ENCODE measurements at regions of chr7 and their contacts with region 1.

Region 1: DNA sequence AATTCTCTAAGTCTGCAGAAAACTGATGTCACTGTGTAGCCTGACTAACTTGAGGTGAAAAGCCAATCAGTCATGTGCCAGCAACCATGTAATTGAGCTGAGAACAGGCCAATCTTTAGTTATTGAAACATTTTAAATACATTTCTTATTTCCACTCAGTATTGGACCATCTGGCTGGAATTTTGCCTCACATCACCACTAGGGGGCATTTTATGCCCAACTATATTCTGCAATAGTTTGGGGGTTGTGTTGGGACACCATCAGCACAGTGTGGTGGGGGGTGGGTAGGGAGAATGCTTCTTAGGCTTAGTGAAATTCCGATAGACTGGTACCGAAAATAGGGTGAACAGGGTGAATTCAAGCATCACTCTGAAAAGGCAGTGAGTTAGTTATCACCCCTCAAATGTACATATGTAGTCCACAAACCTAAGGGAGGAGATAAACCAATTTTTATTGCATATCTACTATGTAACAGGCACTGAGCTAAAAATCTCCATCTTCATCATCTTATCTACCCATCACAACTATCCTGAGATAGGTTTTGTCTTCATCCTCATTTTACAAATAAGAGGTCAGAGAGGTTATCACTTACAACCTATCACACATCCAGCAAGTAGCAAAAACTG is 17.8 kb downstream of the NPSR1 start:
- DNase-seq: peak; percentile 9
- ATAC-seq: peak; percentile 94
- H3K4me3 ChIP-seq: no peak overlapping the region
- H3K27ac ChIP-seq: no peak overlapping the region
- H3K4me1 ChIP-seq: no peaks in the 10 kb centered on the region
- H3K27me3 ChIP-seq: no peaks in the 10 kb centered on the region
- CTCF ChIP-seq: peak; percentile 60 to 70 (median 66)
- EP300 ChIP-seq: no peak
- POLR2A ChIP-seq: no peak
- RAD21 ChIP-seq: peak; percentile 55

Region 2: DNA sequence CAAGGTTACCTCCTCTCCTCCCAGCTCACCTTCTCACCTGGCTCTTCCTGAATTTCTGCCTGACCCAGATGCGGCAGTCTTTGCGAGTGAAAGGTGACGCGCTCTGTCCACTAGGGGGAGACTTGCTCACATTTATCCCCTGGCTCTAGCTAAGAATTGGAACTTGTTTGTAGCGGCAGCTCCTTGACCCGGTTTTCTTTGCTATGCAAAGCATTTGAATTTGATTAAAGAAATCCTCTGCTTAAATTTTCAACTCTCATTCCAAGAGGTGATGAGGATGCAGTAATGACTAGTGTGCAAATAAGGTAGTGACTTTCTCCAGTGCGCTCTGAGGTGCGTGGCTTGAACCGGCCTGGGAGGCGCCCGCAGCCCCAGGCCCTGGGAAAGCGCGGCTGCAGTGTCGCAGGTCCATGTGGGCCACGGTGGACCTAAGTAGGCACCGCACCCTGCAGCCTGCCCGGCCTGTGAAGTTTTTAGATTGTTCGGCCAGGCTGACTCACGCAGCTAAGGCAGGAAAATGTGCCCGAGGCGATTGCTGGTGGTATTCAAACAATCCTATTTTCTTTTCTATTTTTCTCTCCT is 354.8 kb before region 1 on chr7:
- CTCF ChIA-PET with region 1: interaction called, 12 read pairs
- POLR2A ChIA-PET with region 1: no interaction called
- RAD21 ChIA-PET with region 1: no interaction called
- SMC1A ChIA-PET with region 1: no interaction called
- in situ Hi-C with region 1: no loop called
- intact Hi-C with region 1: loop called (anchors 5 kb)
- DNase-seq: peak; percentile 7
- ATAC-seq: peak; percentile 93
- H3K4me3 ChIP-seq: no peak overlapping the region
- H3K27ac ChIP-seq: no peak overlapping the region
- H3K4me1 ChIP-seq: no peaks in the 10 kb centered on the region
- H3K27me3 ChIP-seq: 0 out of 4 replicates have a peak, but pooled peaks cover 0 to 1% of the 10 kb centered on the region in 2 experiments
- CTCF ChIP-seq: peak; percentile 83 to 92 (median 89)
- EP300 ChIP-seq: no peak
- POLR2A ChIP-seq: no peak
- RAD21 ChIP-seq: peak; percentile 79

Region 3: GRCh38 chr7:34727464-34727995 is 51.7 kb after region 1 on chr7:
- CTCF ChIA-PET with region 1: interaction called, 6 read pairs
- POLR2A ChIA-PET with region 1: no interaction called
- RAD21 ChIA-PET with region 1: interaction called, 4 read pairs
- SMC1A ChIA-PET with region 1: interaction called, 9 read pairs
- in situ Hi-C with region 1: no loop called
- intact Hi-C with region 1: loop called (anchors 2 kb)
- DNase-seq: no peak
- ATAC-seq: peak; percentile 76
- H3K4me3 ChIP-seq: no peak overlapping the region
- H3K27ac ChIP-seq: no peak overlapping the region
- H3K4me1 ChIP-seq: no peaks in the 10 kb centered on the region
- H3K27me3 ChIP-seq: no peaks in the 10 kb centered on the region
- CTCF ChIP-seq: no peak
- EP300 ChIP-seq: no peak
- POLR2A ChIP-seq: no peak
- RAD21 ChIP-seq: no peak

Region 4: DNA sequence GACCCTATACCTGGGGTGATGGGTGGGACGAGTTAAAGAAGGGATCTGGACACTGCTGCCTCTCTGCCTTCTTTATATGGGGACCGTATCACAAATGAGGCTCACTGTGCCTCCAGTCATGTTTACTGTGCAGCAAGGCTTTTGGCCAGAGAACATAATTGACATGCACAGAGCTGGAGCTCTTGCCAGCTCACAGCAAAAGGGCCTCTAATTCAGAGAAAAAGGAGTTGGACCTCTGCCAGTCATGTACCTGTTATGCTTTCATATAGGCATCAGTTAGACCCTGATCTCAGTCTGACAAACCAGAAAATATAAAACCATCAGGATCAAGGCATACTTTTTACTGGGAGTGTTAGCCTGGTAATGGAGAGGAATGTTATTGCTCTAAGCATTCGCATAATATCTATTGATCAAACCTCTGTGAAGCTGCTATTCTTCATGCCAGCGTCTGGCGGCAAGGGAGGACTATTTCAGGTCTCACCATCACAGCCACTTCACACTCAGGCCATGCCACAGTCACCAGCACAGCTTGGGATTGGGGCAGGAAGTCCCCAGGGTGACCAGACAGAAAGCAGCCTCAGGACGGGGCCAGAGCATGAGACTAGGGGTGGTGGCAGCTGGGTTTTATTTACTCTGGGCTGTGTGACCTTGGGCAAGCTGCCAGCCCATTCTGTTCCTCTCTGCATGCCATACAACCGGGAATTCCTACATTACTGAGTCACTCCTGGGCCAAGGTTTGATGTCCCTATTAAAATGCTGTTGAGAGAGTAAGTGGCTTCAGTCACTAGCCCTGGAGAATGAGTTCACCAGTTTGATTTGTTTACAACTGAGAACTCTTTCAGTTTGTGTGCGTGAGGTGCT is 72.2 kb after region 1 on chr7:
- CTCF ChIA-PET with region 1: interaction called, 7 read pairs
- POLR2A ChIA-PET with region 1: no interaction called
- RAD21 ChIA-PET with region 1: interaction called, 6 read pairs
- SMC1A ChIA-PET with region 1: interaction called, 17 read pairs
- in situ Hi-C with region 1: no loop called
- intact Hi-C with region 1: no loop called
- DNase-seq: no peak
- ATAC-seq: peak; percentile 64
- H3K4me3 ChIP-seq: no peak overlapping the region
- H3K27ac ChIP-seq: no peak overlapping the region
- H3K4me1 ChIP-seq: no peaks in the 10 kb centered on the region
- H3K27me3 ChIP-seq: no peaks in the 10 kb centered on the region
- CTCF ChIP-seq: peak in 1 of 3 experiments; percentile 24; a peak in 2 of 6 replicates
- EP300 ChIP-seq: no peak
- POLR2A ChIP-seq: no peak
- RAD21 ChIP-seq: no peak

Region 5: DNA sequence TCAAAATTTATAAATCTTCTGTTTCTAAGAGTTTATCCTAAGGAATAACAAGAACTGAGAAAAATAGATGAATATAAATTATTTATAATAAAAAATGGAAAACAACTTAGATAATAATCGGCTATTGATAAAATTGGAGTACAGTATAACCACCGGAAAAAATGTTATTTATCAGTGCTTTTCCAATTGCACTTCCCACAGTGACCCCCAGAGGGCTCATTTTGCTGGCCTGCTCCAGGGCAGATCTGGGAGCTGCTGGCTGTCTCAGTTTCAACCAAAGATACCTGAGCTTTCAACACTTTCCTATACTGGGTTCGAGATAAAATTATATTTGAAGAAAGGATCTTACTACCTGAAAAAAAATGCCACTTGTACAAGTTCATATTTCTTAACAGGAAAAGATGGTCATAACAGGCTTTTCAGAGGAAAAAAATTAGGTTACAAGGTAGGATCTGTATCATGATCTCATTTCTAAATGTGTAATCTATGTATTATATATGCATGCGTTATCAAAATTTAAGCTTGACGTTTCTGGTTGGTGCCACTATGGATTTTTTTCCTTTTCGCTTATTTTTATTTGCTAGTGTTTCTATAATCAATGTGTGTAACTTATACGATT is 147.9 kb after region 1 on chr7:
- CTCF ChIA-PET with region 1: interaction called, 9 read pairs
- POLR2A ChIA-PET with region 1: no interaction called
- RAD21 ChIA-PET with region 1: interaction called, 9 read pairs
- SMC1A ChIA-PET with region 1: interaction called, 13 read pairs
- in situ Hi-C with region 1: no loop called
- intact Hi-C with region 1: loop called (anchors 1 kb)
- DNase-seq: no peak
- ATAC-seq: peak; percentile 87
- H3K4me3 ChIP-seq: no peak overlapping the region
- H3K27ac ChIP-seq: no peak overlapping the region
- H3K4me1 ChIP-seq: no peaks in the 10 kb centered on the region
- H3K27me3 ChIP-seq: no peaks in the 10 kb centered on the region
- CTCF ChIP-seq: peak; percentile 74 to 86 (median 79)
- EP300 ChIP-seq: no peak
- POLR2A ChIP-seq: no peak
- RAD21 ChIP-seq: peak; percentile 74

Region 6: DNA sequence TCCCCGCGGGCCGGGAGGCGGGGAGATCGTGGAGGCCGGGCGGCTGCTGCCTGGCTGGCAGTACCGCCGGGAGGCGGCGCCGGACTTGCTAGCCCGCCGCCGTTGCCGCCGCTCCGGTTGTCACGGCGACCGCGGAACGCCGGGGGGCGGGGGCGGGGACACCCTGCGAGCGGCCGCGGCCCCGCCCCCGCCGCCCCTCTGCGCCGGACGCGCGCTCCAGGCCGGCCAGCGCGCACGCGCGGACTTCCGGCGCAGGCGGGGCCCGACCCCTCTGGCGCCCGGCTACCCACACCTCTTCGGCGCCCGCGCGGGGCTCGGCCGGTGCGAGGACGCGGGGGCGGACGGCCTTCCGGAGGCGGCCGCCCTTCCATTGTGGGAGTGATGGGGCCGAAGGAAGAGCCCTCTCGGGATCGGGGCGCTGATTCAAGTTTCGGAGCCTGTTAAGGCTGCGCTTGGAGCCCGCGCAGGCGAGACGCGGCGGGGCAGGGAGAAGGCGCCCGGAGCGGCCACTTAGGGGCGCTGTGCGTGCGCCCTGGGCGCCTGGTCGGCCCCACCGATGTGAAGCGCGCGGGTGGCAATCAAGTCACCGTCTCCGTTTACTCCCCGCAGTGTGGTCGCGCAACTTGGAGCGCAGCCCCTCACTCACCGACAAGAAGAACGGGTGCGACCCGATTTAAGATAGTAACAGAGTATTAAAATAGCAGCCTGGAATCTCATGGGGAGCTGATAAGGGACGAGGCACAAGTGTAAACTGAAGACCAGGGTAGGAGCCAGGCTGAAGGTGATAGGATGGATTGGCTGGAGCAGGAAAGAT is 361.9 kb after region 1 on chr7:
- CTCF ChIA-PET with region 1: interaction called, 26 read pairs
- POLR2A ChIA-PET with region 1: interaction called, 3 read pairs
- RAD21 ChIA-PET with region 1: interaction called, 20 read pairs
- SMC1A ChIA-PET with region 1: interaction called, 34 read pairs
- in situ Hi-C with region 1: no loop called
- intact Hi-C with region 1: loop called (anchors 1 kb)
- DNase-seq: no peak
- ATAC-seq: peak; percentile 83
- H3K4me3 ChIP-seq: peak overlapping the region; percentile 87
- H3K27ac ChIP-seq: peak overlapping the region; percentile 18; the same call in 1 of the 2 replicates
- H3K4me1 ChIP-seq: peaks cover 10% of the 10 kb centered on the region
- H3K27me3 ChIP-seq: no peaks in the 10 kb centered on the region
- CTCF ChIP-seq: peak; percentile 76 to 78 (median 78)
- EP300 ChIP-seq: no peak
- POLR2A ChIP-seq: peak; percentile 56; the same call in 1 of the 2 replicates
- RAD21 ChIP-seq: peak; percentile 37